ENCODE measurements at regions of chr6 and their contacts with region 1.

Region 1: DNA sequence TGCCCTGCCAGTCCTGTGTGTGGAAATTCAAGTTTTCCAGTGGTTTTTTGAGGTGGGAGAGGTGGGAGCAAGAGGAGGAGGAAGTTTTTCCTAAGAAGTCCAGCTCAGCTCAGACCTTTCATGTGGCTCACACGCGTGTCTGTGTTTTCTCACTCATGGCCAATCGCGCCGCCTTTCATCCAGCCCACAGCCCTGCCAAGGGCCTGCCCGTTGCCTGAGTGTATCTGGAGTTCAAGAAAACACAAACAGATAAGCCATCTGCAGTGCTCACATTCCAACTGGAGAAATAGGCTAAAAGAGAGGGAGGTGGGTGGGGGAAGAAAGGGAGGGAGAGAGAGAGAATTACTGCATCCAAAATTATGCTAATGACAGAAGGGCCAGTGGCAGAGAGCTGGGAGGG is 12.6 kb upstream of the MPC1 start:
- DNase-seq: no peak
- H3K4me3 ChIP-seq: no peak overlapping the region
- H3K27ac ChIP-seq: no peak overlapping the region
- H3K27me3 ChIP-seq: no peaks in the 10 kb centered on the region
- CTCF ChIP-seq: no peak

Region 2: GRCh38 chr6:166156942-166157341 is 238.4 kb before region 1 on chr6:
- intact Hi-C with region 1: loop called in 1 of 2 experiments (anchors 5 kb)
- DNase-seq: no peak
- H3K4me3 ChIP-seq: no peak overlapping the region
- H3K27ac ChIP-seq: no peak overlapping the region
- H3K27me3 ChIP-seq: peaks cover 0 to 17% (median 2%) of the 10 kb centered on the region in 45 donors
- CTCF ChIP-seq: peak in 54 of 56 donors; percentile 23 to 75 (median 57)

Region 3: DNA sequence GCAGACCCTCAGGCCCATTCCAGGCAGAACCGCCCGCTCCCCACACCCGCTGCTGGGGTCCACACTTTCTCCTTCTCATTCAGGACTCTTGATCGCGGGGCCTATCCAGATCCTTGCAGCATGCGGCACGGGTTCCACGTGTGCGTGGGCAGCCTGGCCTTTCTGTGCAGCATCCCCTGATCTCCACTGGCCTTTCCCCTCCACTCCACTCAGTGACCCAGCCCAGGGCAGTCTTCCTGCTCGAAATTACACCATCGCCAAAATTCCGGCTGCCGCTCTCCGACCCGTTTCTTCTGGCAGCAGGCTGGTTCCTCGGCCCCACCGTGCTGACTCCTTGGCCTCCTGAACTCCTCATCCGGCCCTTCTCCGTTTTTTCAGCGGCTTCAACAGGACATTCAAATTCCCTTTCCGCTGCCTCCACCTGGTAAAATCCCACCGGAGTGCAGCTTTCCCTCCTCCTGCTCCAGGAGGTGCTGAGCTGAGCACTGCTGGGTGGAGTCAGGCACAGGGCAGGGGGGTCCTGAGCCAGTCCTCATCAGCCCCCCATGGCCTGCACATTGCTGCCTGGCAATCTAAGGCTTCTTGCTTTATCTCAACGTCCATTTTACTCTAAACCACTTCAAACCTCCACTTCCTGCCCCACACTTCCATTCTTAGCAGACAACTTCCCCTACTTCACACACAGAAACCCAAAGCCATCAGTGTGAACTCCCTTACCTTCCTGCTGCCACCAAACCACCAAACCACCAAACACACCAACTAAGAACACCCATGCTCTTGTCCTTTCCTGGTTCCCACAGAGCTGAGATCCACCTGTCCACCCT is 62.0 kb before region 1 on chr6:
- intact Hi-C with region 1: loop called in 1 of 2 experiments (anchors 5 kb)
- DNase-seq: no peak
- H3K4me3 ChIP-seq: no peak overlapping the region
- H3K27ac ChIP-seq: peak overlapping the region in 35 of 59 donors; percentile 20 to 93 (median 82)
- H3K27me3 ChIP-seq: no peaks in the 10 kb centered on the region
- CTCF ChIP-seq: no peak